PC-9 (cell line): ENCODE measurements at regions of chr1 and their contacts with region 1.

Region 1: DNA sequence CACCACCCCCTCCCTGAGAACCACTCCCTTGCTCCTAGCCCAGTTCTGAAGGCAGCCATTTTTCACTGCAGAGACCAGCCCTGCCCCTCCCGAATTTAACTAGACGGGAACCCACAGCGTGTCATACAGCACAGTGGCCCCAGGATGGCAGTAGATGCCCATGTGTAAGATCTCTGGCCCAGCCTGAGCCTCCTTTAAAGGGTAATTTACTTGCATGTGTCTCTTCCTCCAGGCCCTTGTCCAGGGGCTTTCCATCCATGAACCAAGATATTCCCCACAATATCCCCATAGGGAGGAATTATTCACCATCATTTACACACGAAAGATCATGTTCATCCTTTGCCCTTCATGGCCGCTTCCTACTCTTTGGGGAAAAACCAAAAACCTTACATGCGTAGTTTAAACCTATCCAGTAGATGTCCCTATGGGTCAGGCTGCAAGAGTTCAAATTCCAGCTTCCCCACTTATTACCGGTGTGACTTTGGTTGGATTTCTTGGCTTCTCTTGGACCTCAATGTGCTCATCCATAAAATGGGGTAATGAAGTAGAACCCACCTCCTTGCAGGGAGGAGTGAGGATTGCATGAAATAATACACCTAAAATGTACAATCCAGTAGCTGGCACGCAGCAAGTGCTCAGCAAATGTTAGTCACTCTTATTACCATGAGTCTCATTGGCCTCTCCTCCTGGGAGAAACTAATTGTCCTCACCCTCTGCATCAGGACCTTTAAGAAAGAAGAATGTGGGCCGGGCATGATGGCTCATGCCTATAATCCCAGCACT is 4.0 kb upstream of the LACTBL1 start:
- DNase-seq: peak; percentile 70 to 74
- H3K4me3 ChIP-seq: no peak overlapping the region
- H3K27ac ChIP-seq: peak overlapping the region; percentile 37; the same call in 1 of the 2 replicates
- H3K4me1 ChIP-seq: peaks cover 49% of the 10 kb centered on the region
- H3K27me3 ChIP-seq: no peaks in the 10 kb centered on the region
- CTCF ChIP-seq: peak; percentile 91

Region 2: DNA sequence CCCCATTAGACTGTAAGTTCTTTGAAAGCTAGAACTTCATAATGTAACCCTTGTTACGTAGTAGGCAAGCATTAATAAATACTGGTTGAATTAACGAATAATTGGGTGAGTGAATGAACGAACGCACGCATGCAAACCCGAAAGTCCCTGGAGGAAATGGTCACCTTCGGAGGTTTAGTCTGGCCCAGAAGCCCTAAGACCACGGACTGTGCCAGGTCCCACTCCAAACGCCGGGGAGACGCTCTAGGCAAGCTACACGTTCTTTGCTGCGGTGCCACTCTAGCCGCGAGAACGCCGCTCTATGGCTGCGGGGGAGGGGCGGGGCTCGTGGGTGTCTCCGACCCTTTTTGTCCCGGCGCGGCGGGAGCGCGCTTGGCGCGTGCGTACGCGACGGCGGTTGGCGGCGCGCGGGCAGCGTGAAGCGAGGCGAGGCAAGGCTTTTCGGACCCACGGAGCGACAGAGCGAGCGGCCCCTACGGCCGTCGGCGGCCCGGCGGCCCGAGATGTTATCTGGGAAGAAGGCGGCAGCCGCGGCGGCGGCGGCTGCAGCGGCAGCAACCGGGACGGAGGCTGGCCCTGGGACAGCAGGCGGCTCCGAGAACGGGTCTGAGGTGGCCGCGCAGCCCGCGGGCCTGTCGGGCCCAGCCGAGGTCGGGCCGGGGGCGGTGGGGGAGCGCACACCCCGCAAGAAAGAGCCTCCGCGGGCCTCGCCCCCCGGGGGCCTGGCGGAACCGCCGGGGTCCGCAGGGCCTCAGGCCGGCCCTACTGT is 42.6 kb after region 1 on chr1 and contains the start of gene KDM1A:
- CTCF ChIA-PET with region 1: no interaction called
- POLR2A ChIA-PET with region 1: interaction called, 9 read pairs
- intact Hi-C with region 1: loop called (anchors 2 kb)
- DNase-seq: peak; percentile 88 to 97
- H3K4me3 ChIP-seq: peak within 1 kb of the TSS; percentile 86
- H3K27ac ChIP-seq: peak within 1 kb of the TSS; percentile 88
- H3K4me1 ChIP-seq: peaks cover 31% of the 10 kb centered on the region
- H3K27me3 ChIP-seq: no peaks in the 10 kb centered on the region
- CTCF ChIP-seq: no peak
- total RNA-seq, gene KDM1A: 185 and 213 TPM in 2 replicates

Region 3: GRCh38 chr1:23098463-23099170 is 122.0 kb after region 1 on chr1:
- CTCF ChIA-PET with region 1: interaction called, 4 read pairs
- POLR2A ChIA-PET with region 1: interaction called, 5 read pairs
- intact Hi-C with region 1: loop called (anchors 2 kb)
- DNase-seq: peak; percentile 47 to 55
- H3K4me3 ChIP-seq: no peak overlapping the region
- H3K27ac ChIP-seq: peak overlapping the region; percentile 86
- H3K4me1 ChIP-seq: peaks cover 48% of the 10 kb centered on the region
- H3K27me3 ChIP-seq: no peaks in the 10 kb centered on the region
- CTCF ChIP-seq: peak; percentile 80

Region 4: DNA sequence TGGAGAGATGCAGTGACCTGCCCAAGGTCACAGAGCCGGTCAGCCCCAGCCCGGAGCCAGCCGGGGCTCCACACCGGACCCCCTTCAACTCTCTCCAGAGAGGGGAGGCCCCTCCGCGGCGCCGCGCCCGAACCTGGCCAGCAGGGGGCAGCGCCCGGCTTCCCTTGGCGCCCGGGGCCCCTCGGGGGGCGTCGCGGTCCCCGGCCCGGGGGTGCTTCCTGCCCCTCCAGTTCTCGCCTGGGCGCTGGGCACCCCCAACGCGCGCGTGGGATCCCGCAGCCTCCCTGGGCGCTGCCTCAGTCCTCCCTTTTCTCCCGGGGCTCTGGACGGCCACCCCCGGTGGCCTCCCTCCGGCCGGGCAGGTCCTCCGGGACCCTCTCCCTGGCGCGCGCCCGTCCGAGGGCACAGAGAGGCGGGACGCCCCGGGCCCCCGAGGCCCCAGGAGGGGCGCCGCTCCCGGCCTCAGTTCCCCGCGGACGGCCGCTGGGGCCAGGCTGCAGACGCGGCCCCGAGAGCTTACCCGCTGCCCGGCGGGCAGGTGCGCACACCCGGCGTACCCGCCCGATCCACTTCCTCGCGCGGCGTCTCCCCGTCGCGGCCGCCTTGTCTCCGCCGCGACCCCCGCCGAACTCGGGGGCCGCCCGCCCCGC is 240.2 kb after region 1 on chr1:
- CTCF ChIA-PET with region 1: interaction called, 11 read pairs
- POLR2A ChIA-PET with region 1: no interaction called
- intact Hi-C with region 1: no loop called
- DNase-seq: peak in 1 of 2 experiments; percentile 50
- H3K4me3 ChIP-seq: peak overlapping the region; percentile 66
- H3K27ac ChIP-seq: no peak overlapping the region
- H3K4me1 ChIP-seq: peaks cover 22% of the 10 kb centered on the region; the same call in 1 of the 2 replicates
- H3K27me3 ChIP-seq: no peaks in the 10 kb centered on the region
- CTCF ChIP-seq: peak; percentile 79

Region 5: GRCh38 chr1:23403735-23404486 is 427.3 kb after region 1 on chr1:
- CTCF ChIA-PET with region 1: interaction called, 3 read pairs
- POLR2A ChIA-PET with region 1: no interaction called
- intact Hi-C with region 1: loop called (anchors 1 kb)
- DNase-seq: peak; percentile 92 to 96
- H3K4me3 ChIP-seq: peak overlapping the region; percentile 25; the same call in 1 of the 2 replicates
- H3K27ac ChIP-seq: peak overlapping the region; percentile 73
- H3K4me1 ChIP-seq: peaks cover 31% of the 10 kb centered on the region
- H3K27me3 ChIP-seq: no peaks in the 10 kb centered on the region
- CTCF ChIP-seq: peak; percentile 88

Region 6: DNA sequence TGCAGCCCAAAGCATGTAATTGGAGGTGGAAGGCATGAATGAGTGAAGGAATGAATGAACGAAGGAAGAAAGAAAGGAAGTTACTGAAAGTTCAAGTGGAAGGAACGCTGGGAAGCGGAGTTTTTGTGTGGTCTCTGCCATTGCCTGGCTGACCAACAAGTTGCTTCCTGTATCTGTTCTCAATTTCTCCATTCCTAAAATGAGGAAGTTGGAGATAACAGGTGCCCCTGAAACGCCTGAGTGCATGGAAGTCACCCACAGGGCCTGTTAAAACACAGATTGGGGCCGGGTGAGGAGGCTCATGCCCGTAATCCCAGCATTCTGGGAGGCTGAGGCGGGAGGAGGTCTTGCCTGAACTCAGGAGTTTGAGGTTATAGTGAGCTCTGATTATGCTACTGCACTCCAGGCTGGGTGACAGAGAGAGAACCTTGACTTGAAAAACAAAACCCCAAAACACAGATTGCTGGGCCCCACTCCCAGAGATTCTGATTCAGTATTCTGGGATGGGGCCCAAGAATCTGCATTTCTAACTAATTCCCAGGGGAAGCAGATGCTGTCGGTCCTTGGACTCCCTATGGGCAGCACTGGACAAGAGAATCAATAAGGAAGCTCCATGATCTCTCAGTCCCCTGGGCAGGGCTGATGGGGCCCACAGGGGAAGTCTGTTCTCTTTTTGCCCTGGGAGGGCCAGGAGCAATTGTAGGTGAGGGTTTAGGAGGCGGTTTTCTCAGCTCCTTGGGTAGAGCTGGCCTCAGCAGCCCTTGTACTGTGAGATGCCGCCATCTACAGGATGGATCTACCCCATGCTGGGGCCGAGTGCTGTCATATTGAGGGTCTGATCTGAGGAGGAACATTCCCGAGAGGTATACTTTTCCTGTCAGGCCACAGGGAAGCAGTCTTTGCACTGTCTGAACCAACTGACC is 939.8 kb after region 1 on chr1:
- CTCF ChIA-PET with region 1: no interaction called
- POLR2A ChIA-PET with region 1: no interaction called
- intact Hi-C with region 1: loop called (anchors 5 kb)
- DNase-seq: peak; percentile 60 to 74
- H3K4me3 ChIP-seq: no peak overlapping the region
- H3K27ac ChIP-seq: no peak overlapping the region
- H3K4me1 ChIP-seq: peaks cover 8% of the 10 kb centered on the region; the same call in 1 of the 2 replicates
- H3K27me3 ChIP-seq: no peaks in the 10 kb centered on the region
- CTCF ChIP-seq: peak; percentile 68